ENCODE measurements at regions of chr11 and their contacts with region 1.

Region 1: GRCh38 chr11:62556108-62556871 is 9.7 kb upstream of the AHNAK start:
- DNase-seq: peak; percentile 64
- ATAC-seq: peak; percentile 35
- H3K4me3 Mint-ChIP-seq: peak overlapping the region; percentile 81
- H3K27ac Mint-ChIP-seq: peak overlapping the region; percentile 99
- H3K4me1 Mint-ChIP-seq: peaks cover 87% of the 10 kb centered on the region
- H3K27me3 Mint-ChIP-seq: no peaks in the 10 kb centered on the region
- CTCF ChIP-seq: no peak

Region 2: GRCh38 chr11:61361686-61362541 is 1194.4 kb before region 1 on chr11 and contains the starts of genes CYB561A3 and TMEM138:
- CTCF ChIA-PET with region 1: no interaction called
- POLR2A ChIA-PET with region 1: interaction called, 10 read pairs
- intact Hi-C with region 1: loop called (anchors 10 kb)
- DNase-seq: peak; percentile 84
- ATAC-seq: peak; percentile 76
- H3K4me3 Mint-ChIP-seq: peak within 1 kb of the TSS; percentile 100
- H3K27ac Mint-ChIP-seq: peak within 1 kb of the TSS; percentile 98
- H3K4me1 Mint-ChIP-seq: peaks cover 59% of the 10 kb centered on the region
- H3K27me3 Mint-ChIP-seq: no peaks in the 10 kb centered on the region
- CTCF ChIP-seq: no peak
- total RNA-seq, gene CYB561A3: 397 and 433 TPM in 2 replicates
- total RNA-seq, gene TMEM138: 69.7 and 81.2 TPM in 2 replicates

Region 3: GRCh38 chr11:62427630-62428233 is 128.6 kb before region 1 on chr11:
- CTCF ChIA-PET with region 1: interaction called, 161 read pairs
- POLR2A ChIA-PET with region 1: interaction called, 17 read pairs
- intact Hi-C with region 1: loop called (anchors 1 kb)
- DNase-seq: no peak
- ATAC-seq: peak; percentile 23
- H3K4me3 Mint-ChIP-seq: peak overlapping the region; percentile 25
- H3K27ac Mint-ChIP-seq: peak overlapping the region; percentile 57
- H3K4me1 Mint-ChIP-seq: peaks cover 24% of the 10 kb centered on the region
- H3K27me3 Mint-ChIP-seq: peaks cover 2% of the 10 kb centered on the region
- CTCF ChIP-seq: no peak

Region 4: DNA sequence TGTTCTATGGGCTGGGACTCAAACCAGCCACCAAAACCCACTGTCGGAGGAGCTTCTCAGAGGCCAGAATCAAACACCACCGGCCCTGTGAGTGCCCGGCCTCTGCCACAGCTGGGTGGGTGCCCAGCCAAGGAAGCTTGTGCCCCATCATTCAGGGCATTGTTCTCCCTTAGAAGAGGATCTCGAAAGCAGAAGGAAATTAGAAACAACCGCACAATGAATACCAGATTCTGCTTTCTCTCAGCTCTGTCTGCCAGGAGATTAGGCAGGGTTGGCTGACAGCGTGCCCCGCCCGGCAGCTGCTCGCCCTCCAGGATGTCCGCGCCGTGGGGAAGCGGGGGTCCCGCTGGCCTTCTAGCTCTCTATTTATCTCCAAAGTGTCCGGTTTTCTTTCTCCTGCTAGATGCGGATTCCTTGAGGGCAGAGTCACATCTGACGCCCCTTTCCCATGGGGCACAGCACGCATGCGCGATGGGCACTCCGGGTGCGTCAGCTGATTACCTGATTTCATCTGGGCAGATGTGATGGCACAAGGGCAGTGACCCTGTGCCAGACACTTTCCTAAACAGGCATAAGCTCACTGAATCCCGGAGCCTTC is 112.0 kb before region 1 on chr11:
- CTCF ChIA-PET with region 1: interaction called, 7 read pairs
- POLR2A ChIA-PET with region 1: interaction called, 16 read pairs
- intact Hi-C with region 1: no loop called
- DNase-seq: peak; percentile 58
- ATAC-seq: peak; percentile 86
- H3K4me3 Mint-ChIP-seq: peak overlapping the region; percentile 83
- H3K27ac Mint-ChIP-seq: peak overlapping the region; percentile 95
- H3K4me1 Mint-ChIP-seq: peaks cover 29% of the 10 kb centered on the region
- H3K27me3 Mint-ChIP-seq: no peaks in the 10 kb centered on the region
- CTCF ChIP-seq: no peak

Region 5: GRCh38 chr11:62459080-62459479 is 97.2 kb before region 1 on chr11:
- CTCF ChIA-PET with region 1: no interaction called
- POLR2A ChIA-PET with region 1: no interaction called
- intact Hi-C with region 1: no loop called
- DNase-seq: no peak
- ATAC-seq: no peak
- H3K4me3 Mint-ChIP-seq: no peak overlapping the region
- H3K27ac Mint-ChIP-seq: no peak overlapping the region
- H3K4me1 Mint-ChIP-seq: peaks cover 10% of the 10 kb centered on the region
- H3K27me3 Mint-ChIP-seq: no peaks in the 10 kb centered on the region
- CTCF ChIP-seq: no peak

Region 6: GRCh38 chr11:62487738-62488551 is 68.3 kb before region 1 on chr11:
- CTCF ChIA-PET with region 1: no interaction called
- POLR2A ChIA-PET with region 1: no interaction called
- intact Hi-C with region 1: no loop called
- DNase-seq: no peak
- ATAC-seq: no peak
- H3K4me3 Mint-ChIP-seq: no peak overlapping the region
- H3K27ac Mint-ChIP-seq: no peak overlapping the region
- H3K4me1 Mint-ChIP-seq: no peaks in the 10 kb centered on the region
- H3K27me3 Mint-ChIP-seq: peaks cover 13% of the 10 kb centered on the region
- CTCF ChIP-seq: no peak

Region 7: GRCh38 chr11:62542750-62543567 is 13.3 kb before region 1 on chr11:
- CTCF ChIA-PET with region 1: interaction called, 192 read pairs
- POLR2A ChIA-PET with region 1: interaction called, 183 read pairs
- intact Hi-C with region 1: loop called (anchors 1 kb)
- DNase-seq: peak; percentile 74
- ATAC-seq: peak; percentile 29
- H3K4me3 Mint-ChIP-seq: peak overlapping the region; percentile 95
- H3K27ac Mint-ChIP-seq: peak overlapping the region; percentile 97
- H3K4me1 Mint-ChIP-seq: peaks cover 78% of the 10 kb centered on the region
- H3K27me3 Mint-ChIP-seq: no peaks in the 10 kb centered on the region
- CTCF ChIP-seq: peak; percentile 78

Region 8: GRCh38 chr11:62601394-62602140 is 45.3 kb after region 1 on chr11 and contains the start of gene MTA2:
- CTCF ChIA-PET with region 1: no interaction called
- POLR2A ChIA-PET with region 1: interaction called, 10 read pairs
- intact Hi-C with region 1: loop called (anchors 2 kb)
- DNase-seq: peak; percentile 100
- ATAC-seq: peak; percentile 81
- H3K4me3 Mint-ChIP-seq: peak within 1 kb of the TSS; percentile 92
- H3K27ac Mint-ChIP-seq: peak within 1 kb of the TSS; percentile 97
- H3K4me1 Mint-ChIP-seq: peaks cover 45% of the 10 kb centered on the region
- H3K27me3 Mint-ChIP-seq: no peaks in the 10 kb centered on the region
- CTCF ChIP-seq: no peak
- total RNA-seq, gene MTA2: 170 and 175 TPM in 2 replicates

Region 9: GRCh38 chr11:62694455-62695167 is 138.3 kb after region 1 on chr11:
- CTCF ChIA-PET with region 1: interaction called, 3 read pairs
- POLR2A ChIA-PET with region 1: no interaction called
- intact Hi-C with region 1: loop called (anchors 1 kb)
- DNase-seq: peak; percentile 55
- ATAC-seq: peak; percentile 88
- H3K4me3 Mint-ChIP-seq: no peak overlapping the region
- H3K27ac Mint-ChIP-seq: no peak overlapping the region
- H3K4me1 Mint-ChIP-seq: peaks cover 5% of the 10 kb centered on the region
- H3K27me3 Mint-ChIP-seq: no peaks in the 10 kb centered on the region
- CTCF ChIP-seq: no peak

Measured in activated B cell treated with CpG ODN at 0.5 μM for 24 hours (primary cell).